ENCODE measurements at regions of chr3 and their contacts with region 1.

Region 1: DNA sequence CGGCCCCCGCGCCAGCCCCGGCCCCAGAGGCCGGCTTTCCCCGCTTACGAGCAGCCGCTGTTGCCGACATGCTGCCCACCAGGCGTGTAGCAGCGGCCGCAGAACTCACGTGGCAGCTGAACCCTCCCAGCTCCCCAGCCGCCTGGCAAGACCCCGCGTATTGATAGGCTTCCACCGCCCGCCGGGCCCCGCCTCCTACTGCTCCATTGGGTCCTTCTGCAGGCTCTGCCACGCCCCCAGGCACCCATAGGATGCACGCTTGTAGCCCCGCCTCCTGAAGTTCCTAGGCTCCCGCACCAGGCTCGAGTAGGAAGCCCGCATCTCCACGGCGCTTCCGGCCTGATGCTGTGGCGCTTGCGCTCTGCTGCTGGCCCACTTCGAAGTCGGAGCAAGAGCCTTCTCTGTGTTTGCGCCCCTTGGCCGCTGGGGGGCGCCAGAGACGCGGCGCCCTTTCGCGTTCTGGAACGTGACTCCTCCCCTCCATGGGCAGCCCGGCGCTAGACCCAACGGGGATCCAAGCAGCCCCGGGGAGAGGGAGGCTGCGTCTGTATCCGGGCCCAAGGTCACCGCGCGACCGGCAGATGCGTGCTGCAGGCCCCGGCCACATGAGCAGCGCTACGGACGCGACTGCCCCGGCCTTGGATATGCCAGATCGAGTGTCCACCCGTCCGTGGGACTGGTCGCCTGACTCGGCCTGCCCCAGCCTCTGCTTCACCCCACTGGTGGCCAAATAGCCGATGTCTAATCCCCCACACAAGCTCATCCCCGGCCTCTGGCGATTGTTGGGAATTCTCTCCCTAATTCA is at the starts of genes PARP3 and RRP9:
- DNase-seq: peak; percentile 98 to 100 (median 100)
- H3K4me3 ChIP-seq: peak within 1 kb of the TSS; percentile 72 to 73
- H3K4me3 Mint-ChIP-seq: peak within 1 kb of the TSS; percentile 88 to 96 (median 92)
- H3K27ac ChIP-seq: peak within 1 kb of the TSS; percentile 66
- H3K27ac Mint-ChIP-seq: peak within 1 kb of the TSS; percentile 73 to 94 (median 91)
- H3K4me1 ChIP-seq: peaks cover 37% of the 10 kb centered on the region
- H3K4me1 Mint-ChIP-seq: peaks cover 18 to 48% (median 28%) of the 10 kb centered on the region in 4 donors
- H3K27me3 ChIP-seq: no peaks in the 10 kb centered on the region
- H3K27me3 Mint-ChIP-seq: no peaks in the 10 kb centered on the region
- total RNA-seq, gene PARP3: 8.1 to 10.5 TPM
- total RNA-seq, gene RRP9: 15.2 to 17.3 TPM

Region 2: DNA sequence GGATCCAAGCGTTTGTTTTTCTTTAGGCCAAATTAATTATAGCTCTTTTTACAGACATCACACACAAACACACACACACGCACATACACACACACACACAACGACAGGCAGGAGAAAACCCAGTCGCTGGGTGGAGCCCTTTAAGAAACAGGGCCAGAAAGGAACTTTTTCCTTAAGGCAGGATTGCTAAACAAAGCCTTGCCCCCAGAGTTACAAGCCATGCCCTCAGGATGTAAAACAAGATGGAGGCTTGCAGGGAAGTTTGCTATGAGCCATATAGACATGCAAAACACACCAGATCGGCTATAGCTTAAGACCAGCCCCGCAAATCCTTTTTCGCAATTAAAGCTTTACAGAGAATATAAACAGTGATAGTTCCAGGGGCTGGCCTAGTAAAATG is 96.9 kb before region 1 on chr3:
- CTCF ChIA-PET with region 1: no interaction called
- POLR2A ChIA-PET with region 1: no interaction called
- intact Hi-C with region 1: no loop called
- DNase-seq: no peak
- H3K4me3 ChIP-seq: no peak overlapping the region
- H3K4me3 Mint-ChIP-seq: no peak overlapping the region
- H3K27ac ChIP-seq: no peak overlapping the region
- H3K27ac Mint-ChIP-seq: no peak overlapping the region
- H3K4me1 ChIP-seq: no peaks in the 10 kb centered on the region
- H3K4me1 Mint-ChIP-seq: no peaks in the 10 kb centered on the region
- H3K27me3 ChIP-seq: peaks cover 4% of the 10 kb centered on the region
- H3K27me3 Mint-ChIP-seq: peaks cover 23 to 25% of the 10 kb centered on the region in 2 donors

Region 3: DNA sequence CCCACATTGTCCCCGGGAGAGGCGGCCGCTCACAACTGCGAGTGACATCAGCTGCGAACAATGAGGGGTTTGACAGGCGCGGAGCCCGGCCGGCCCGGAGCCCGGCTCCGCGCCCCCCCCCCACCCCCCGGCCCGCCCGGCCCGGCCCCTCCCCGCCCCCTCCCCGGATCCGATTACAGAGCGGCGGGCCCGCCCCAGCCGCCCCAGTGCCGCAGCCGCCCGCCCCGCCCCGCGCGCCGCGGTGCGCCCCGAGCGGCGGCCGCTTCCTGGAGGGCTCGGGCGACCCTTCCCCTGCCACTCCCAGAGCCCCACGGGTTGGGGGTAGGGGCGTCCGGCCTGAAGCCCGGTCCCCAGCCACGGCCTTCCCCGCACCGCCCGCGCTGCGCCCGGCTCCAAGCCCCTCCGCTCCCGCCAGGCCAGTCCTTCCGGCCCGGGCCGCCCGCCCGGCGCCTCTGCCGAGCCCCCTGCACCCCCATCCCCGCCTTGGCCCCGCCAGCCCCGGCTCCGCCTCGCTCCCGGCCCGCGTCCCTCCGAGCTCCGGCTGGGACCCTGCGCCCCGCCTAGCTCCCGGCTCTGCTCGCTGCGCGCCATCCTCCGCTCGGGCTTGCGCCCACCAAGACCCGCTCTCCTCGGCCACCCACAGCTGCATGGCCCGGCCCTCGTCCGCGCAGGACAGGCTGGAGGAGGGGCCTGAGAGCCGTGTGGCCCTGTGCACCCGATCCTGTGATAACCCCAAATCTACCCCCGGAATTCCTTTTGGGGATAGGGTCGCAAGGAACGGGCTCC is 25.6 kb after region 1 on chr3 and contains the start of gene PCBP4:
- CTCF ChIA-PET with region 1: interaction called, 49 read pairs
- POLR2A ChIA-PET with region 1: interaction called, 72 read pairs
- intact Hi-C with region 1: loop called (anchors 1 kb)
- DNase-seq: peak in 3 of 5 donors; percentile 32 to 48 (median 43)
- H3K4me3 ChIP-seq: peak within 1 kb of the TSS; percentile 63 to 65
- H3K4me3 Mint-ChIP-seq: peak within 1 kb of the TSS; percentile 81 to 94 (median 83)
- H3K27ac ChIP-seq: peak within 1 kb of the TSS; percentile 57
- H3K27ac Mint-ChIP-seq: peak within 1 kb of the TSS; percentile 68 to 94 (median 85)
- H3K4me1 ChIP-seq: peaks cover 22% of the 10 kb centered on the region
- H3K4me1 Mint-ChIP-seq: peaks cover 15 to 40% (median 29%) of the 10 kb centered on the region in 4 donors
- H3K27me3 ChIP-seq: no peaks in the 10 kb centered on the region
- H3K27me3 Mint-ChIP-seq: no peaks in the 10 kb centered on the region
- total RNA-seq, gene PCBP4: 18.7 to 20.5 TPM

Region 4: DNA sequence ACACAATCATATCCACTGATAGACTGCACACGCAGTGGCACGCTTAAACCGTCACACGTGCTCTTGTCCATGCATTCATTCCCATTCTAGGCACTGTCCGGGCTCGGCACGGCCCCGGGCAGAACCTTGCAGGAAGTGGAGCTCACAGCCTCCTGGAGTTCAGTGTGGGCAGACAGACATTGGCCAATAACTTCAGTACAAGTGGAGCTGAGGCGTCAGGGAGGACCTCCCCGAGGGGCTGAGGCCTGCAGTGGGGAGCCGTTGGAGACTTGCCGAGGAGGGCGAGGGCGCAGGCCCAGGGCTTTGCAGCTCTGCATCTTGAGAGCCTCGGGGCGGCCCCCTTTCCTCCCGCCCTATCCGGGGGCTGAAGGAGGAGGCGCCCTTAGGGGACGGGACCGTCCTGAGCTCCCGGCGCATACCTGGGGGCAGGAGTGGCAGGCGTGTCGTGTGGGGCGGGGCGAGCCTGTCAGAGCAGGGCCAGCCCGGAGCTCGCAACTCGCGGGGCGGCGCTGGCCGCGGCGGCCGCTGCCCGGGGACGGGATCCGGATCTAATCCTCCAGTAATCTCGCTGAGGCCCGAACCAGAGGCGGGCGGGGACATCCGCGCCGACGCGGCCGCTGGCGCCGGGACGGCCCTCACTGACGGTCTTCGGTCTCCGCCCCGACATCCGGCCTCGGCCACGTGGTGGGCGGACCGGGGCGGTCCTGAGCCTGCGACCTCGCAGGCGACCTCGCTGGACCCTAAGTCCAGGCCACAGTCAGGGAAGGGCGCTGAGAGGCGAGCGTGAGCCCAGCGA is 41.0 kb after region 1 on chr3 and contains the start of gene ACY1:
- CTCF ChIA-PET with region 1: interaction called, 19 read pairs
- POLR2A ChIA-PET with region 1: interaction called, 10 read pairs
- intact Hi-C with region 1: no loop called
- DNase-seq: peak; percentile 54 to 83 (median 60)
- H3K4me3 ChIP-seq: peak within 1 kb of the TSS; percentile 36 to 55
- H3K4me3 Mint-ChIP-seq: peak within 1 kb of the TSS; percentile 90 to 97 (median 94)
- H3K27ac ChIP-seq: peak within 1 kb of the TSS; percentile 77
- H3K27ac Mint-ChIP-seq: peak within 1 kb of the TSS; percentile 84 to 98 (median 94)
- H3K4me1 ChIP-seq: peaks cover 26% of the 10 kb centered on the region
- H3K4me1 Mint-ChIP-seq: peaks cover 7 to 29% (median 24%) of the 10 kb centered on the region in 4 donors
- H3K27me3 ChIP-seq: no peaks in the 10 kb centered on the region
- H3K27me3 Mint-ChIP-seq: no peaks in the 10 kb centered on the region
- total RNA-seq, gene ACY1: 7.7 to 8.4 TPM

Region 5: GRCh38 chr3:52001443-52001974 is 59.5 kb after region 1 on chr3:
- CTCF ChIA-PET with region 1: interaction called, 17 read pairs
- POLR2A ChIA-PET with region 1: interaction called, 31 read pairs
- intact Hi-C with region 1: loop called (anchors 1 kb)
- DNase-seq: peak; percentile 81 to 86 (median 84)
- H3K4me3 ChIP-seq: no peak overlapping the region
- H3K4me3 Mint-ChIP-seq: peak overlapping the region in 5 of 8 donors; percentile 4 to 26 (median 8)
- H3K27ac ChIP-seq: no peak overlapping the region
- H3K27ac Mint-ChIP-seq: peak overlapping the region in 4 of 7 donors; percentile 46 to 80 (median 60)
- H3K4me1 ChIP-seq: peaks cover 21% of the 10 kb centered on the region
- H3K4me1 Mint-ChIP-seq: peaks cover 3 to 22% (median 12%) of the 10 kb centered on the region in 4 donors
- H3K27me3 ChIP-seq: no peaks in the 10 kb centered on the region
- H3K27me3 Mint-ChIP-seq: no peaks in the 10 kb centered on the region

Region 6: DNA sequence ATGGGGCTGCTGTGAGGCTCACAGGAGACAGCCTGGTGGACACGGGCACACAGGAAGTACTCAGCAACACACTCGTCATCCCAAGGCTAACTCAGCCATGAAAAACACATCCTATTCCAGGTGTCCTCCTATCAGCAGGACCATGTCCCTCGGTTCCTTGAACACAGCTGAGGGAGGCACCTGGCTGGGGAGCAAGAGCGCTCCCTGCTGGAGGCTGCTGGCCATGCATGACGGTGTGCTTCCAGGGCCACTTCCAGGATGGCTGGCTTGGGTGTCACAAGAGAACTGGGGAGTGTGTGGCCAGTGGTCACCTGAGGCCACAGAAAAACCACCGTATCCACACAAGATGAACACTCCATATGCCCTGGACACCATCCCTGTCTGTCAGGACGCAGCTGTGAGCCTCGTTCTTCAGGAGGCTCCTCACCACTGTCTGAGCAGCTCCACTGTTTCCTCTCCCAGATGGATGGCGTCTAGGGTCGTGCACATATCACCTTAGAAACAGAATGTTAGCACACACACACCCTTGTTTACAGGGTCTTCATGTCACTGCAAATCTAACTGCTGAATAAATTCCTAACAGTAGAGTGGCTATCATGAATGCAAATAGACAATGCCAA is 181.2 kb after region 1 on chr3:
- CTCF ChIA-PET with region 1: interaction called, 15 read pairs
- POLR2A ChIA-PET with region 1: no interaction called
- intact Hi-C with region 1: loop called (anchors 1 kb)
- DNase-seq: peak; percentile 66 to 79 (median 70)
- H3K4me3 ChIP-seq: no peak overlapping the region
- H3K4me3 Mint-ChIP-seq: no peak overlapping the region
- H3K27ac ChIP-seq: no peak overlapping the region
- H3K27ac Mint-ChIP-seq: no peak overlapping the region
- H3K4me1 ChIP-seq: no peaks in the 10 kb centered on the region
- H3K4me1 Mint-ChIP-seq: no peaks in the 10 kb centered on the region
- H3K27me3 ChIP-seq: no peaks in the 10 kb centered on the region
- H3K27me3 Mint-ChIP-seq: no peaks in the 10 kb centered on the region

Region 7: GRCh38 chr3:52154117-52155094 is 212.4 kb after region 1 on chr3 and contains the start of gene POC1A:
- CTCF ChIA-PET with region 1: no interaction called
- POLR2A ChIA-PET with region 1: interaction called, 8 read pairs
- intact Hi-C with region 1: loop called (anchors 1 kb)
- DNase-seq: peak; percentile 83 to 90 (median 85)
- H3K4me3 ChIP-seq: peak within 1 kb of the TSS; percentile 93 to 95
- H3K4me3 Mint-ChIP-seq: peak within 1 kb of the TSS; percentile 93 to 98 (median 97)
- H3K27ac ChIP-seq: peak within 1 kb of the TSS; percentile 74
- H3K27ac Mint-ChIP-seq: peak within 1 kb of the TSS; percentile 95 to 98 (median 98)
- H3K4me1 ChIP-seq: peaks cover 13% of the 10 kb centered on the region
- H3K4me1 Mint-ChIP-seq: peaks cover 3 to 15% (median 8%) of the 10 kb centered on the region in 4 donors
- H3K27me3 ChIP-seq: no peaks in the 10 kb centered on the region
- H3K27me3 Mint-ChIP-seq: no peaks in the 10 kb centered on the region
- total RNA-seq, gene POC1A: 0.99 to 1.1 TPM

Measured in CD4-positive, alpha-beta memory T cell (primary cell).